Activated CD4-positive, alpha-beta memory T cell treated with anti-CD3 and anti-CD28 coated beads for 36 hours (primary cell): ENCODE measurements at regions of chr7 and their contacts with region 1.

Region 1: GRCh38 chr7:155509725-155510551 is 36.4 kb downstream of the CNPY1 start:
- DNase-seq: no peak
- H3K4me3 Mint-ChIP-seq: peak overlapping the region; percentile 28
- H3K27ac Mint-ChIP-seq: no peak overlapping the region
- H3K4me1 Mint-ChIP-seq: peaks cover 15% of the 10 kb centered on the region
- H3K27me3 Mint-ChIP-seq: peaks cover 65% of the 10 kb centered on the region

Region 2: DNA sequence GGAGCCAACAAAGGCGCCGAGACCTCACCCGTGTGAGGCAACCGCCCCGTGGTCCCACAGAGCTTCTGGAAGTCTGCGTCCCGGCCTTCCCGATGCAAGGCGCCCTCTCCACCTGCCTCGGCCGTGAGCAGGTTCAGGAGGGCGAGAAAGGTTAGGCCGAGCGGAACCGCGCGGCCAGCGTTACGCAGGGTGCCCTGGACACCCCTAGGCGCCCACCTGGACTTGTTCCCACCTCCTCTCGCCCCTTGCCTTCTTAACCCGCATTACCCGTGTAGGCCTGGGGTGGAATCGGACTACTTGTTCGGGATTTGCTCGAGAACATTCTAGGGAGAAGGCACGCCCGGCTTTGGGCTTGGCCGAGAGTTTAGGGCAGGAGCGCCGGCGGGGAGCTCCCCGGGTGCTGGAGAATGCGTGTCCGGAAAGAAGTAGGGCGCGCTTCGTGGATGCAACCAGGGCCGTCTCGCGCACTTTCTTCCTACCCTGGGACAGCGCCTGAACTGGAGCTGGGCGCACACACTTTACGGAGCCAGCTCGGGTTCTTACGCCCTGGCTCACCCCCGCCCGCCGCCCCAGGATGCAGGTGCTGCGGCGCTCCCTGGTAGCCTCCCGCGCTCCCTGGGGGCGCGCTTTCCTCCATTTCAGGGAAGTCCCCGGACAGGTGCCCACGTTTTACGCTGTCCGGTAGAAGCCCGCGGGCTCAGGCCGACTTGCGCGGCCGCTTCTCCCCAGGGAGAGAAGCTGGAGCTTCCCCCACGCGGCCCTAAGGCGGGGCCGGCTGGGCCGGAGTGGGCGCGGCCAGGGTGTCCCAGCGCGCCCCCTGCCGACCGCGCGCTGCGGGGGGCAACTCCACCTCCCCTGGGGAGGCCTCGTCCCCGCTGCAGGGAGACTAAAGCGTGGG is 137.8 kb before region 1 on chr7:
- CTCF ChIA-PET with region 1: no interaction called
- POLR2A ChIA-PET with region 1: no interaction called
- intact Hi-C with region 1: loop called (anchors 2 kb)
- DNase-seq: peak; percentile 20
- H3K4me3 Mint-ChIP-seq: no peak overlapping the region
- H3K27ac Mint-ChIP-seq: no peak overlapping the region
- H3K4me1 Mint-ChIP-seq: peaks cover 30% of the 10 kb centered on the region
- H3K27me3 Mint-ChIP-seq: peaks cover 68% of the 10 kb centered on the region

Region 3: GRCh38 chr7:155456738-155457564 is 53.0 kb before region 1 on chr7:
- CTCF ChIA-PET with region 1: no interaction called
- POLR2A ChIA-PET with region 1: no interaction called
- intact Hi-C with region 1: loop called (anchors 2 kb)
- DNase-seq: peak; percentile 56
- H3K4me3 Mint-ChIP-seq: peak overlapping the region; percentile 56
- H3K27ac Mint-ChIP-seq: no peak overlapping the region
- H3K4me1 Mint-ChIP-seq: peaks cover 27% of the 10 kb centered on the region
- H3K27me3 Mint-ChIP-seq: peaks cover 73% of the 10 kb centered on the region

Region 4: DNA sequence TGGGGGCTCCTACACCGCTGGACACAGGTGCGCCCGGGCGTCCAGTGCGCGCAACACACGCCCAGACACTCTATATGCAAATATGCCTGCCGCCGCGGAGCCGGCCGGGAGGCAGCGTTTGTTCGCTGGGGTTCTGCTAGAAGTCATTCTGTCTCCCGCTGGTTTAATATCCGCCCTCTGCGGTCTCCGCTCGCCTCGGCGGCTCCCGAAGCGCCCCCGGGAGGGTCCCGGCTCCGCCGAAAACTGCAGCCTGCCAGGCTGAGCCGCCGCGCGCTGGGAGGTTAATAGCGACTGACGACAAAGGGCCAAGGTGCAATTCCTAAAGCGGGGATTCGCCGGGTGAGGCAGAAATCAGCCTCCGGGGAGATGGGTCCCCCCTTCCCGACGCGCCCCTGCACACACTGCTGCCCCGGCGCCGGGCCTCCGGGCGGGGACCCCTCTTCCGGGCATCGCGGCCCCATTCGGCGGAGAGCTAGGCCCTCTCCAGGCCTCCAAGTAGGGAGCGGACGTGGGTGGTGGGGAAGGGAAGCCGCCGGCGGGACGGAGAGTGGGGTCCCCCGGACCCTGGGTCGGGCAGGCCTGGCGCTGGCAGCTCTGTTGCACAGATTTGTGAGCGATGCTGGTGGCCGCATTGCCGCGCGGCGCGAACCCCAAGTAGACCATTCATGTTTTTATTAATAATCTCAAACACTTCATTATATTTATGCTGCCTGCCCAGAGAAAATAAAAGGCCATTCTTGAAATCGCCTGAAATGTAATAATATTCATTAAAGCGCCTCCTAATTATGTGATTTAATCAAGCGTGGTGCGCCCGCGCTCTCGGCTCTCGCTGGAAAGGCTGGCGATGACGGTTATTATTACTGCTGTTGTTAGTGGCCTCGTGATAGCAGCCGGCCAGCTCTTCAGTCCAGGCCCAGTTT is 42.9 kb before region 1 on chr7:
- CTCF ChIA-PET with region 1: no interaction called
- POLR2A ChIA-PET with region 1: no interaction called
- intact Hi-C with region 1: loop called (anchors 2 kb)
- DNase-seq: peak; percentile 59
- H3K4me3 Mint-ChIP-seq: no peak overlapping the region
- H3K27ac Mint-ChIP-seq: no peak overlapping the region
- H3K4me1 Mint-ChIP-seq: peaks cover 19% of the 10 kb centered on the region
- H3K27me3 Mint-ChIP-seq: peaks cover 77% of the 10 kb centered on the region